Naive thymus-derived CD4-positive, alpha-beta T cell (primary cell): ENCODE measurements at regions of chr15 and their contacts with region 1.

Region 1: DNA sequence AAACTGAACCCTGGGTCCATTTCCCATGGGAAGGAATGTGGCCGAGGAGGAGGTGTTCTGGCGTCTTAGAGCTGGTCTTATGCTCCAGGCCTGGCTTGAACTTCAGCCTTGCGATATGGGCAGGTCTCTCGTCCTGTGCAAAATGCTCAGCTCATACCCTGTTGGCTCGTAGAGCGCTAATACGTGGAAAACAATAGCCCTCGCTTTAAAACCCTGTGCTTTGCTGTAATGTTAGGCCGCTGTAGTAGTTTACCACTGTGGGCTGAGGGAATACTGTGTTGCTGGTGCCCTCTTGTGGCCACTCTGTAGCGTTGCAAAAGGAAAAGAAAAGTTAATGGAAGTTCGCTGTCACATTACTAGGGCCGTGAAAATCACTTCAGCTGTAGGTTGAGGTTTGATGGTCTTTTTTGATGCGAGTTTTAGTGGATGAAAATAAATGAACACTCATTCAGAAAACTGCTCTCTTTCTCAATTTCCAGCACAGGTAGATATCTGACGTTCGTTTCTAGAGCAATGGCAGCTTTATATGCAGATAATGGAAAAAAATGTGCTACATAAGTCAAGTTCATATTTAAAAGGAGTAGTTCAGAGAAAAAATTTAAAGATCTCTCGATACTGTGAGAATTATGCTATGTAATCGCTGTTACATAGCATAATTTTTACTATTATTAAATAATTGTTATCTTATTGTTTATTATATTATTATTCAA is 92.9 kb downstream of the MCTP2 start:
- DNase-seq: peak; percentile 9 to 60 (median 44)
- ATAC-seq: peak; percentile 98
- H3K4me3 ChIP-seq: no peak overlapping the region
- H3K4me3 Mint-ChIP-seq: peak overlapping the region in 3 of 10 donors; percentile 15 to 45 (median 29)
- H3K27ac ChIP-seq: no peak overlapping the region
- H3K27ac Mint-ChIP-seq: peak overlapping the region in 1 of 9 donors; percentile 16
- H3K4me1 ChIP-seq: peaks cover 0 to 8% of the 10 kb centered on the region in 2 donors
- H3K4me1 Mint-ChIP-seq: peaks cover 0 to 25% (median 4%) of the 10 kb centered on the region in 7 donors
- H3K27me3 ChIP-seq: no peaks in the 10 kb centered on the region
- H3K27me3 Mint-ChIP-seq: no peaks in the 10 kb centered on the region

Region 2: GRCh38 chr15:93030430-93031105 is 1293.7 kb before region 1 on chr15:
- CTCF ChIA-PET with region 1: interaction called, 3 read pairs
- POLR2A ChIA-PET with region 1: no interaction called
- intact Hi-C with region 1: loop called in 1 of 2 experiments (anchors 1 kb)
- DNase-seq: peak; percentile 38 to 69 (median 59)
- ATAC-seq: peak; percentile 85
- H3K4me3 ChIP-seq: no peak overlapping the region
- H3K4me3 Mint-ChIP-seq: peak overlapping the region in 1 of 10 donors; percentile 12
- H3K27ac ChIP-seq: no peak overlapping the region
- H3K27ac Mint-ChIP-seq: peak overlapping the region in 6 of 9 donors; percentile 69 to 82 (median 74)
- H3K4me1 ChIP-seq: peaks cover 0 to 11% of the 10 kb centered on the region in 2 donors
- H3K4me1 Mint-ChIP-seq: peaks cover 6 to 33% (median 20%) of the 10 kb centered on the region in 7 donors
- H3K27me3 ChIP-seq: no peaks in the 10 kb centered on the region
- H3K27me3 Mint-ChIP-seq: no peaks in the 10 kb centered on the region

Region 3: DNA sequence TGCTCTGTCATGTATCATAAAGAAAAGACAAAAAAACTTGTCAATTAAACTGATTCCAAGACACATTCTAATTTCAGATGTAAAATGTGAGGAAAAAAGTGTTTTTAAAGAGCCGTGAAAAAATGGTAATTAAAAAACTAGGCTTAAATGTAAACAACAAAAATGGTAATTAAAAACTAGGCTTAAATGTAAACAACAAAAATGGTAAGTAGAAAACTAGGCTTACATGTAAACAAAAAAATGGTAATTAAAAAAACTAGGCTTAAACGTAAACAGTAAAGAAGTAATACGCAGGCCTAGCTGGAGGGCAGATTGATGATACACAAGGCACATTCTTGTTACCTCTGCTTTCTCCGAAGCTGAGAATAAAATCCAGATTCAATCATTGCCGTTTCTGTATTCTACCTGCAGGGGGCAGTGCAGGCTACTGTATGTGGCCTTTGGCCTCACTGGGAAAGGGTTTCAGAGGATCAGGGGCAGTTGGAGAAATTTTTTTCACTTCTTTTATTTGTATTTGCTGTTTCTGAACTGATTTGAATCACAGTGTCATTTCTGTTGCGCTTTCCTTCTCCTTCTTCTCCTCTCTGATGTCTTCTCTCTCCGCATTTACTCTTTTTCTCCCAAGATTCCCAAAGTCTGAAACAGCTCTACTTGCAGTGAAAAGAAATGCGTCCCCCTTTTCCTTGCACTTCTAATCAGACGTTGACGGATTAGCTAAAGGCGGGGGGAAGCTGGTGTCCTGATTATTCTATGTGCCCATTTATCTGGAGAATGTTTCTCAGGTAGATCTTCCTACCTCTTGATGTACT is 160.1 kb before region 1 on chr15:
- CTCF ChIA-PET with region 1: interaction called, 78 read pairs
- POLR2A ChIA-PET with region 1: interaction called, 3 read pairs
- intact Hi-C with region 1: loop called (anchors 1 kb)
- DNase-seq: peak in 8 of 9 donors; percentile 18 to 53 (median 35)
- ATAC-seq: peak; percentile 77
- H3K4me3 ChIP-seq: no peak overlapping the region
- H3K4me3 Mint-ChIP-seq: no peak overlapping the region
- H3K27ac ChIP-seq: no peak overlapping the region
- H3K27ac Mint-ChIP-seq: no peak overlapping the region
- H3K4me1 ChIP-seq: no peaks in the 10 kb centered on the region
- H3K4me1 Mint-ChIP-seq: peaks cover 0 to 9% (median 0%) of the 10 kb centered on the region in 7 donors
- H3K27me3 ChIP-seq: no peaks in the 10 kb centered on the region
- H3K27me3 Mint-ChIP-seq: peaks cover 0 to 30% (median 4%) of the 10 kb centered on the region in 5 donors

Region 4: GRCh38 chr15:94230956-94231722 is 93.1 kb before region 1 on chr15 and contains the start of gene MCTP2:
- CTCF ChIA-PET with region 1: interaction called, 9 read pairs
- POLR2A ChIA-PET with region 1: no interaction called
- intact Hi-C with region 1: loop called (anchors 1 kb)
- DNase-seq: peak; percentile 64 to 88 (median 73)
- ATAC-seq: peak; percentile 91
- H3K4me3 ChIP-seq: peak within 1 kb of the TSS; percentile 73
- H3K4me3 Mint-ChIP-seq: peak within 1 kb of the TSS; percentile 88 to 97 (median 96)
- H3K27ac ChIP-seq: peak within 1 kb of the TSS; percentile 72
- H3K27ac Mint-ChIP-seq: peak within 1 kb of the TSS; percentile 69 to 94 (median 90)
- H3K4me1 ChIP-seq: peaks cover 11 to 33% of the 10 kb centered on the region in 2 donors
- H3K4me1 Mint-ChIP-seq: peaks cover 33 to 79% (median 52%) of the 10 kb centered on the region in 7 donors
- H3K27me3 ChIP-seq: no peaks in the 10 kb centered on the region
- H3K27me3 Mint-ChIP-seq: peaks cover 0 to 2% (median 0%) of the 10 kb centered on the region in 5 donors
- total RNA-seq, gene MCTP2: 13.8 to 44.5 (median 17.8) TPM

Region 5: GRCh38 chr15:94306700-94307650 is 17.3 kb before region 1 on chr15:
- CTCF ChIA-PET with region 1: no interaction called
- POLR2A ChIA-PET with region 1: no interaction called
- intact Hi-C with region 1: loop called in 1 of 2 experiments (anchors 2 kb)
- DNase-seq: no peak
- ATAC-seq: peak; percentile 61
- H3K4me3 ChIP-seq: peak overlapping the region; percentile 19
- H3K4me3 Mint-ChIP-seq: peak overlapping the region in 2 of 10 donors; percentile 10 to 54
- H3K27ac ChIP-seq: no peak overlapping the region
- H3K27ac Mint-ChIP-seq: peak overlapping the region in 2 of 9 donors; percentile 29 to 89
- H3K4me1 ChIP-seq: peaks cover 0 to 30% of the 10 kb centered on the region in 2 donors
- H3K4me1 Mint-ChIP-seq: peaks cover 6 to 61% (median 11%) of the 10 kb centered on the region in 7 donors
- H3K27me3 ChIP-seq: no peaks in the 10 kb centered on the region
- H3K27me3 Mint-ChIP-seq: no peaks in the 10 kb centered on the region

Region 6: GRCh38 chr15:94348084-94348483 is 23.8 kb after region 1 on chr15:
- CTCF ChIA-PET with region 1: no interaction called
- POLR2A ChIA-PET with region 1: no interaction called
- intact Hi-C with region 1: no loop called
- DNase-seq: no peak
- ATAC-seq: no peak
- H3K4me3 ChIP-seq: no peak overlapping the region
- H3K4me3 Mint-ChIP-seq: no peak overlapping the region
- H3K27ac ChIP-seq: no peak overlapping the region
- H3K27ac Mint-ChIP-seq: no peak overlapping the region
- H3K4me1 ChIP-seq: no peaks in the 10 kb centered on the region
- H3K4me1 Mint-ChIP-seq: peaks cover 0 to 9% (median 0%) of the 10 kb centered on the region in 7 donors
- H3K27me3 ChIP-seq: no peaks in the 10 kb centered on the region
- H3K27me3 Mint-ChIP-seq: no peaks in the 10 kb centered on the region